ENCODE measurements at regions of chr16 and their contacts with region 1.

Region 1: GRCh38 chr16:67372664-67373063 is 20.6 kb downstream of the TPPP3 start:
- DNase-seq: no peak
- H3K4me3 ChIP-seq: no peak overlapping the region
- H3K27ac ChIP-seq: no peak overlapping the region
- H3K4me1 ChIP-seq: no peaks in the 10 kb centered on the region
- H3K27me3 ChIP-seq: peaks cover 1% of the 10 kb centered on the region
- CTCF ChIP-seq: peak; percentile 50 to 53

Region 2: DNA sequence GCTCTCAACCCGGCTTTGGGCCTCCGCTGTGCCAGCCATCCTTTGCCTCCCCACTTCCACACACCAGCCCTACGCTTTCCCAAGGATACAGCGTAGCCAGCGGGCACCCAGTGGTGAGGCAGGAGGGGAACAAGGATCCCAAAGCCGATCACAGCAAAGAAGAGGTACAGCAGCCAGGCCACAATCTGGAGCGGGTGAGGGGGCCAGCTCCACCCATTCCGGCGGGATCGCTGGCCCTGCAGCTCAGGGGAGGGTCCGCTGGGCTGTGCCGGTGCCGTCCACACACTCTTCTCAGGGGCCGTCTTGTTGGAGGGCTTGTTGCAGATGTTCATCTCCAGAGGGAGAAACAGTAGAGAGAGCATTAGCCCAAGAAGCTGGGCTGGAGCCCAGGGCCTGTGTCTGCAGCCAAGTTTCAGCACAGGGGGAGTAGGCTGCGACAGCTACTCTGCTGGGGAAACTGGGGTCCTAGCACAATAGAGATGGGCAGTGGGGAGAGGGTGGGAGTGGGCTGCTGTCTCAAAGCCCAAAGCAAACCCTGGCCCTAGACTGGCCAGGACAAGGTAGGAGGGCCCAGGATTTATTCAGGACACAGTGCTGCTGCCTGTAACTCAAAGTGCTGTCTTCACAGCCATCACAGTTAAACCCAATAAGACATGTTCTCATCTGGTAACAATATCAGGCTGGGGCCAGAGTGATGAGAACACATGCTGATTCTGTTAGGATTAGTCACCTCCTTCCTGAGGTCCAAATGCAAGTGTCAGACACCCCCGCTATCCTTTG is 33.6 kb after region 1 on chr16:
- CTCF ChIA-PET with region 1: no interaction called
- dilution Hi-C with region 1: no loop called
- in situ Hi-C with region 1: no loop called
- intact Hi-C with region 1: no loop called
- DNase-seq: peak; percentile 75
- H3K4me3 ChIP-seq: no peak overlapping the region
- H3K27ac ChIP-seq: peak overlapping the region; percentile 90
- H3K4me1 ChIP-seq: peaks cover 57% of the 10 kb centered on the region
- H3K27me3 ChIP-seq: no peaks in the 10 kb centered on the region
- CTCF ChIP-seq: no peak

Region 3: GRCh38 chr16:67461600-67462592 is 89.2 kb after region 1 on chr16:
- CTCF ChIA-PET with region 1: no interaction called
- dilution Hi-C with region 1: no loop called
- in situ Hi-C with region 1: no loop called
- intact Hi-C with region 1: loop called (anchors 2 kb)
- DNase-seq: no peak
- H3K4me3 ChIP-seq: no peak overlapping the region
- H3K27ac ChIP-seq: no peak overlapping the region
- H3K4me1 ChIP-seq: peaks cover 38% of the 10 kb centered on the region
- H3K27me3 ChIP-seq: no peaks in the 10 kb centered on the region
- CTCF ChIP-seq: no peak

Region 4: GRCh38 chr16:67816240-67817031 is 443.8 kb after region 1 on chr16:
- CTCF ChIA-PET with region 1: no interaction called
- dilution Hi-C with region 1: no loop called
- in situ Hi-C with region 1: no loop called
- intact Hi-C with region 1: no loop called
- DNase-seq: peak; percentile 57
- H3K4me3 ChIP-seq: no peak overlapping the region
- H3K27ac ChIP-seq: no peak overlapping the region
- H3K4me1 ChIP-seq: no peaks in the 10 kb centered on the region
- H3K27me3 ChIP-seq: no peaks in the 10 kb centered on the region
- CTCF ChIP-seq: peak; percentile 99 to 100